ENCODE measurements at regions of chr18 and their contacts with region 1.

Region 1: GRCh38 chr18:74342416-74343043 is 26.9 kb downstream of the C18orf63 start:
- DNase-seq: no peak
- ATAC-seq: peak; percentile 66 to 80 (median 72)
- H3K4me3 ChIP-seq: no peak overlapping the region
- H3K27ac ChIP-seq: no peak overlapping the region
- H3K4me1 ChIP-seq: no peaks in the 10 kb centered on the region
- H3K27me3 ChIP-seq: no peaks in the 10 kb centered on the region
- CTCF ChIP-seq: peak; percentile 67 to 86 (median 72)
- POLR2A ChIP-seq: no peak

Region 2: GRCh38 chr18:74040459-74041332 is 301.8 kb before region 1 on chr18:
- intact Hi-C with region 1: loop called in 1 of 2 experiments (anchors 10 kb)
- DNase-seq: peak; percentile 68 to 76 (median 69)
- ATAC-seq: peak; percentile 92 to 96 (median 94)
- H3K4me3 ChIP-seq: no peak overlapping the region
- H3K27ac ChIP-seq: no peak overlapping the region
- H3K4me1 ChIP-seq: no peaks in the 10 kb centered on the region
- H3K27me3 ChIP-seq: no peaks in the 10 kb centered on the region
- CTCF ChIP-seq: peak; percentile 66 to 82 (median 73)
- POLR2A ChIP-seq: no peak

Region 3: DNA sequence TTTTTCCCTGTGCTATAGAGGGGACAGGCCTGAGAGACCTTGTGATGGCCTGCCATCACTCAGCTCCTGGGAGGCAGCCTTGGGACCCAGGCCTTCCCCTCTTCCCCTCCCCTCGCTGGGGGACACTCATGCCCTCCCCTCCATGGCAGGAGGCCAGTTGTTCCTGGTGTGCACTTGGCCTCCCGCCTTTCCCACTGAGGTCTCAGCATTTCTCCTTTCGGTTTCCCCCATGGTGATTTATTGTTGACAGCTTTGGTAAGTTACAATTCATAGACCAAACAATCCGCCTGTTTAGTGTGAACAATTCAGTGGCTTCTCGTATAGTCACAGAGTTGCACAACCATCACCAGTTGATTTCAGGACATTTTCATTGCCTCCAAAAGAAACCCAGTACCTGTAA is 181.6 kb after region 1 on chr18:
- intact Hi-C with region 1: no loop called
- DNase-seq: peak in 1 of 3 donors; percentile 55
- ATAC-seq: peak; percentile 18 to 44 (median 26)
- H3K4me3 ChIP-seq: no peak overlapping the region
- H3K27ac ChIP-seq: no peak overlapping the region
- H3K4me1 ChIP-seq: no peaks in the 10 kb centered on the region
- H3K27me3 ChIP-seq: no peaks in the 10 kb centered on the region
- CTCF ChIP-seq: no peak
- POLR2A ChIP-seq: no peak